Aorta (tissue), 5 donors: ENCODE measurements at regions of chr6 and their contacts with region 1.

Region 1: GRCh38 chr6:127464881-127465459 is 5.8 kb upstream of the KIAA0408 start:
- DNase-seq: peak; percentile 79 to 84
- ATAC-seq: peak; percentile 90
- H3K4me3 ChIP-seq: no peak overlapping the region
- H3K27ac ChIP-seq: peak overlapping the region in 1 of 2 donors; percentile 8
- H3K4me1 ChIP-seq: peaks cover 0 to 8% of the 10 kb centered on the region in 2 donors
- H3K27me3 ChIP-seq: no peaks in the 10 kb centered on the region

Region 2: DNA sequence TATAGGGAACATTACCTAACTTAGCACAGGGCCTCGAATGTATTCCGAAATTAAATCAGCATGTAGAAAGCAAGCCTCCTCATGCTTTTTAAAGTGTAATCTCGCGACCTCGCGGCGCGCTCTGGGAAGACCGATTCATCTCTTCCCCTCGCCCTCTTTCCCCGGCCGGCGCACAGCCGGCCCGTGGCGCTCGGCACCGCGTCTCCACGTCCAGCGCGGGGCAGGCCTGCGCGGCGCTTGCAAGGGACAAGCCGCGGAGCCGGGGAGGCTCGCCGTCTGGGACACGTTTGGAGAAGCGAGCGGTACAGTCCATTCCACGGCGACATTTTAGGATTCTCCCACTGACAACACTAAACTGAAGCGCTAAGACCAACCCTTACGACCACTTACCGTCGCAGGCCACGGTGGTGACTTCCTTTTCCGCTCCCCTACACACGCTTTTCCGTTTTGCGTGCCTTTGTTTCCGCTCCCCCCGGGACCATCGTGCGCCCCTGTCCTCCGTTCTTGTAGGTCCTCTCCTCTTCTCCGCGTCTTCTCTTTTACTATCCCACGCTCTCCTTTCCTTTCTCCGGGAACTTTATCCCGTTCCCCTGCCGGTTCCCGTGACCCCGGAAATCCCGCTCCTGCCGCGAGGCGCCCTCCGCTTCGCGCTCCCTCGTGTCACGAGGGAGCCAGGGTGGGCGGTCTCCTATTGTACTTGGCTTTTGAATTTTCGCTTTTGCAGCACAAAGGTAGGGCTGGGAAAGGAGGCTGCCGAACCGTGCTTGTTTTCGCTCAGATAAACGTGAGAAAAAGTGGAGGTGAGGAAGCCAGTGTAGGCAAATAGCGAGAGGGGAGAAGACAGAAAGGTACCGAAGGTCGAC is 121.8 kb before region 1 on chr6 and contains the start of gene ECHDC1:
- intact Hi-C with region 1: loop called in 1 of 2 experiments (anchors 5 kb)
- DNase-seq: peak; percentile 71 to 87
- ATAC-seq: peak; percentile 92
- H3K4me3 ChIP-seq: peak within 1 kb of the TSS; percentile 14 to 66
- H3K27ac ChIP-seq: peak within 1 kb of the TSS in 1 of 2 donors; percentile 2
- H3K4me1 ChIP-seq: peaks cover 0 to 3% of the 10 kb centered on the region in 2 donors
- H3K27me3 ChIP-seq: no peaks in the 10 kb centered on the region
- total RNA-seq, gene ECHDC1: 28.2 to 44.0 TPM

Region 3: DNA sequence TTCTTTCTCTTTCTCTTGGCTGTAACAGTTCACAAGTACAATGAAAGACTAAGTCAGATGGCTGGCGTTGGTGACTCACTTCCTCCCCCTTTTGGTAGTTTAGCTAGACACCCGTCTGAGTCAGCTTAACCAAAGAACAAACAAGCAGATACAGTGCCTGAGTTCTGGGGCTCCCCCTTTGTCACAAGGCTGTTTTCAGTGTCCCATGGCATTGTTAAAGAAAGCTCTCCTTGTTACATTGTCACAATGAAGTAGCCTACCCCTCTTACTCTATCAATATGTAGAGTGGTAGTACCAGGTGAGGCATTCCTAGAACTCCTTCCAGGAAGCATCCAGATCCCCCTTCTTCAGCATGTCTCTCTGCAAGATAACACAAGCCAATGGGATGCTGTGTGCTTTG is 44.4 kb before region 1 on chr6:
- intact Hi-C with region 1: loop called in 1 of 2 experiments (anchors 5 kb)
- DNase-seq: peak in 1 of 2 donors; percentile 80
- ATAC-seq: peak; percentile 93
- H3K4me3 ChIP-seq: no peak overlapping the region
- H3K27ac ChIP-seq: no peak overlapping the region
- H3K4me1 ChIP-seq: no peaks in the 10 kb centered on the region
- H3K27me3 ChIP-seq: no peaks in the 10 kb centered on the region

Region 4: GRCh38 chr6:127539272-127539671 is 74.3 kb after region 1 on chr6:
- intact Hi-C with region 1: loop called in 1 of 2 experiments (anchors 2 kb)
- DNase-seq: no peak
- ATAC-seq: no peak
- H3K4me3 ChIP-seq: no peak overlapping the region
- H3K27ac ChIP-seq: no peak overlapping the region
- H3K4me1 ChIP-seq: no peaks in the 10 kb centered on the region
- H3K27me3 ChIP-seq: no peaks in the 10 kb centered on the region

Region 5: GRCh38 chr6:127949251-127949650 is 484.3 kb after region 1 on chr6:
- intact Hi-C with region 1: no loop called
- DNase-seq: no peak
- ATAC-seq: no peak
- H3K4me3 ChIP-seq: no peak overlapping the region
- H3K27ac ChIP-seq: no peak overlapping the region
- H3K4me1 ChIP-seq: no peaks in the 10 kb centered on the region
- H3K27me3 ChIP-seq: no peaks in the 10 kb centered on the region